ENCODE measurements at regions of chr7 and their contacts with region 1.

Region 1: GRCh38 chr7:40047661-40048060 is 86.8 kb downstream of the MPLKIP start:
- DNase-seq: no peak
- H3K4me3 ChIP-seq: no peak overlapping the region
- H3K27ac ChIP-seq: no peak overlapping the region
- H3K27me3 ChIP-seq: no peaks in the 10 kb centered on the region
- CTCF ChIP-seq: peak; percentile 24; the same call in 1 of the 2 replicates

Region 2: GRCh38 chr7:40000734-40001315 is 46.8 kb before region 1 on chr7:
- CTCF ChIA-PET with region 1: interaction called, 7 read pairs
- POLR2A ChIA-PET with region 1: interaction called, 10 read pairs
- DNase-seq: no peak
- H3K4me3 ChIP-seq: no peak overlapping the region
- H3K27ac ChIP-seq: no peak overlapping the region
- H3K27me3 ChIP-seq: no peaks in the 10 kb centered on the region
- CTCF ChIP-seq: no peak

Measured in AG04450 (cell line).